PC-3 (cell line): ENCODE measurements at regions of chr2 and their contacts with region 1.

Region 1: DNA sequence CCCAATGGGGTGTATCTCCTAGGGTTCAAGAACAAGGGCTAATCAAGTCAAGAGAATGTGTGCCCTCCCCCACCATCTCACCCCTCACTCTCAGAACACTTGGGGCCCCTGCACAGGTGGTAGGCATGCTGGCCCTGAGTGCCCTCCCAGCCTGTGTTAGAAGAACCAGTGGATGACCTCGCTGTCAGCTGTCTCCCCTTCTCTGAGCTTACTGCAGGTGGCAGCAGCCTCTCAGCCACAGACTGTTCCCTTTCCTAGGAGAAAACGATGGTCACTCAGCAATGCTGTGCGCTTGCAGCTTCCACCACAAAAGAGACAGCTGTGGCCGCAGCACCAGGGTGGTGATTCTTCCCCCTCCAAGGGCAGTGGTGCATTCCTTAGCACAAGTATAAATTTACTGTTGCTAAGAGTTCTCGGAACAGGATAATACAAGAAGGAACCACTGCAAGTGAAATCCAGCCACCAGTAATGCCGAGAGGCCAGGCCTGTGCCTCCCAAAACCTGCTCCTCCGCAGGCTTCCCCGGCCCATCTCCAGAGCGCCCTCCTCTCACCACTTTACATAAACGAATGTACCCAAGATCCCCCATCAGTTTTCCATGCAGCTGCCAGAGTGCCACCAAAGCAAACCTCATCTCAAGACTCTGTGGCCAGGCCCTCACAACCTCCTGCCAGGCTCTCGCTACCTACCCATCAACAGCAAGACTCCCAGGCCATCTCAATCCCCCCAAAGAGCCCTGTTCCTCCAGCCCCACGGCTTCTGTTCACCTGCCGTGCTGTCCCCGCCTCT is 935 bp upstream of the RAMP1 start:
- DNase-seq: peak; percentile 84
- ATAC-seq: peak; percentile 53
- H3K4me3 ChIP-seq: peak overlapping the region; percentile 76
- H3K27ac ChIP-seq: peak overlapping the region; percentile 47
- H3K4me1 ChIP-seq: peaks cover 54% of the 10 kb centered on the region
- H3K27me3 ChIP-seq: no peaks in the 10 kb centered on the region
- CTCF ChIP-seq: peak; percentile 88

Region 2: GRCh38 chr2:237691908-237692600 is 166.4 kb before region 1 on chr2:
- CTCF ChIA-PET with region 1: no interaction called
- POLR2A ChIA-PET with region 1: no interaction called
- intact Hi-C with region 1: loop called (anchors 10 kb)
- DNase-seq: peak; percentile 86
- ATAC-seq: peak; percentile 59
- H3K4me3 ChIP-seq: peak overlapping the region; percentile 94
- H3K27ac ChIP-seq: peak overlapping the region; percentile 91
- H3K4me1 ChIP-seq: peaks cover 68% of the 10 kb centered on the region
- H3K27me3 ChIP-seq: no peaks in the 10 kb centered on the region
- CTCF ChIP-seq: no peak

Region 3: GRCh38 chr2:237749961-237750360 is 108.5 kb before region 1 on chr2:
- CTCF ChIA-PET with region 1: interaction called, 11 read pairs
- POLR2A ChIA-PET with region 1: no interaction called
- intact Hi-C with region 1: no loop called
- DNase-seq: no peak
- ATAC-seq: no peak
- H3K4me3 ChIP-seq: no peak overlapping the region
- H3K27ac ChIP-seq: no peak overlapping the region
- H3K4me1 ChIP-seq: no peaks in the 10 kb centered on the region
- H3K27me3 ChIP-seq: no peaks in the 10 kb centered on the region
- CTCF ChIP-seq: no peak

Region 4: DNA sequence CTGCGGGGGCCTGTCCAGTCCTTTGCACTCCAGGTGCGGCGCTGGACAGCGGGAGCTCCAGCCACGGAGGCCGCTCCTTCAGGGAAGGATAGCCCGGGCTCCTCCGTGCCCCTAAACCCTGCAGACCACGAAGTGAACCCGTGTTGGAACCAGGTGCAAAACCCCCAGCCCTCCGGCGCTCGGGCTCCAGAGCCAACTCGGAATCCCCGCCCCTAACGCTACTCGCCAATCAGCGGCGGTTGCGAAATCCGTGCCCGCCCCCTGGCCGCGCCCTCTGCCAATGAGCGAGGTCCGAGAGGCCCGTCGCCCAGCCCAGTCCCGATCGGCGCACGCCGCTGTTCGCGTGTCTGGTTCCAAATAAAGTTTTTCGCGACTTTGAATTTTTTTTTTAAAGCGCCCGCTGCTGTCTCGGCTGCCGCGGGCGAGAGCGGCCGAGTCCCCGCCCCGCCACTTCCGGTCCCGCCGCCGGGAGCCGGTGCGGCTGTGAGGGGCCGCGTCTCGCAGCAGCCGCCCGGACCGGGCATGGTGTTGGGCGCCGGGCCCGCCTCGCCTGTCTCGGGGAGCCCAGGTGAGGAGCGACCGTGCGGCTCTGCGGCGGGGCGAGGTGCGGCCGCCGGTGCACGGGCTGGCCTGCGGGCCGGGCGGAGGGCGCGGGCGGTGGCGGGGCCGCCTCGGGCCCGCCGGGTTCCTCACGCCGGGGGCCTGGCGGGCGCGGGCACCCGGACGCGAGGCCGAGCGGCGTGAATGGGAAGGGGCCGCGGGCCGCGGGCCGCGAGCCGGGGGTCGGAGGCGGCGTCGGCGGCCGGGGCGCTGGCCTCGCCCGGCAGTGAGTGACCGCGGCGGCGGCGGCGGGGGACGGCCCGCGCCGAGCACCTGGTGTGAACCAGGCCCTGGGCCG is 108.3 kb after region 1 on chr2 and contains the start of gene UBE2F:
- CTCF ChIA-PET with region 1: interaction called, 4 read pairs
- POLR2A ChIA-PET with region 1: no interaction called
- intact Hi-C with region 1: loop called (anchors 2 kb)
- DNase-seq: peak; percentile 98
- ATAC-seq: peak; percentile 86
- H3K4me3 ChIP-seq: peak within 1 kb of the TSS; percentile 88
- H3K27ac ChIP-seq: peak within 1 kb of the TSS; percentile 95
- H3K4me1 ChIP-seq: peaks cover 40% of the 10 kb centered on the region
- H3K27me3 ChIP-seq: no peaks in the 10 kb centered on the region
- CTCF ChIP-seq: no peak
- total RNA-seq, gene UBE2F: 37.5 and 57.8 TPM in 2 replicates

Region 5: DNA sequence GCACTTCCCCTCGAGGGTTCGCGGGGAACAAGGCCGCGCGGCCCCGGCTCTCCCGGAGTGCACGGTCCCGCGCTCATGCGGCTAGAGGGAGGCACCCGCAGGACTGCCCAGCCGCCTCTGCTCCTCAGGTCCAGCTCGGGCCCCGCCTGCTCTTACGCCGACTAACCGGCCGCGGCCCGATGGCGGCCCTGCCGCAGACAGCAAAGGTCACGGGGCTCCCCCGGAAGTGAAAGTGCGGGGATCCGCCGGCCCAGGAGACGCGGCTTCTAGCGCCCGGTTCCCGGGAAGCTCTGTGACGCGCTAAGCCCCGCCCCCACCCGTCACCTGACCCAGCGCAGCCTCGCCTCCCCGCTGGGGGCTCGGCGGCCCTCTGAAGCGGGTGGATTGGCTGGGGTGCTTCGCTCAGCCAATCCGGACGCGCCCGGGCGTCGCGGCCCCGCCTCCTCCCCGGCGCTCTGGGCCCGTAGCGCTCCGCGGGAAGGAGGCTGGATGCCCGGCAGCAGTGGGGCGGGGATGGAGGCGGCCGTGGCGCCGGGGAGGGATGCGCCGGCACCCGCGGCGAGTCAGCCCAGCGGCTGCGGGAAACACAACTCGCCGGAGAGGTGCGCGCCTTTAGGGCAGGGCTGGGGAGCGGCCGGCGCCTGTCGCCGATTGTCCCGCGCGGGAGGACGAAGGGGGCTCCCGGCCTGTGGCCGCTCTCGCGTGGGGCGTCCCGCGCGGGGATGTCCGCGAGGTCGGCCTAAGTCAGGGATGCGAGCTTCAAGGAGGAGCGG is 202.2 kb after region 1 on chr2 and contains the start of gene SCLY:
- CTCF ChIA-PET with region 1: no interaction called
- POLR2A ChIA-PET with region 1: no interaction called
- intact Hi-C with region 1: loop called (anchors 5 kb)
- DNase-seq: peak; percentile 97
- ATAC-seq: peak; percentile 96
- H3K4me3 ChIP-seq: peak within 1 kb of the TSS; percentile 93
- H3K27ac ChIP-seq: peak within 1 kb of the TSS; percentile 50
- H3K4me1 ChIP-seq: peaks cover 18% of the 10 kb centered on the region; the same call in 1 of the 2 replicates
- H3K27me3 ChIP-seq: no peaks in the 10 kb centered on the region
- CTCF ChIP-seq: no peak
- total RNA-seq, gene SCLY: 19.5 and 23.1 TPM in 2 replicates

Region 6: GRCh38 chr2:238106686-238107524 is 248.4 kb after region 1 on chr2:
- CTCF ChIA-PET with region 1: no interaction called
- POLR2A ChIA-PET with region 1: no interaction called
- intact Hi-C with region 1: loop called (anchors 1 kb)
- DNase-seq: peak; percentile 49
- ATAC-seq: peak; percentile 61
- H3K4me3 ChIP-seq: peak overlapping the region; percentile 65
- H3K27ac ChIP-seq: no peak overlapping the region
- H3K4me1 ChIP-seq: no peaks in the 10 kb centered on the region
- H3K27me3 ChIP-seq: no peaks in the 10 kb centered on the region
- CTCF ChIP-seq: peak; percentile 48

Region 7: DNA sequence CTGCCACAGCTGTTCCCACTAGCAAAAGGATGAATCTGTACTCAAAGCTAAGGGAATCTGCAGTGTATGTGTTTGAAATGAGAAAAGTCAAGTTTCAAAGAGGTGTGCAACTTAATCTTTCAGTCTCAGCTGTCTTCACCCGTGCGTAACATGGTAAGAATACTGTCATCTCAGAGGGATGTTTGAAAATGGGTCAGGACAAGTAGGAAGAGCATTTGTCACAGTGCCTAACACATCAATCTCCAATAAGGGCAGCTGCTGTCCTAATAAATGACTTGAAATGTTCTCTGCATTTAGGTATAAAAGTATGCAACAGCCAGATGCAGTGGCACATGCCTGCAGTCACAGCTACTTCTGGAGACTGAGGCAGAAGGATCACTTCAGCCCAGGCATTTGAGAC is 332.0 kb after region 1 on chr2:
- CTCF ChIA-PET with region 1: no interaction called
- POLR2A ChIA-PET with region 1: no interaction called
- intact Hi-C with region 1: no loop called
- DNase-seq: no peak
- ATAC-seq: no peak
- H3K4me3 ChIP-seq: no peak overlapping the region
- H3K27ac ChIP-seq: no peak overlapping the region
- H3K4me1 ChIP-seq: no peaks in the 10 kb centered on the region
- H3K27me3 ChIP-seq: no peaks in the 10 kb centered on the region
- CTCF ChIP-seq: no peak